Activated T-helper 1 cell treated with anti-CD3 and anti-CD28 coated beads, Interleukin-12 subunit alpha, Interleukin-12 subunit beta, Interleukin-2, Interleukin-4 antibody, amounts not matched to agents 30 ng/mL and 10 ng/mL and 1 ng/mL, durations not matched to agents 14 hours and 24 hours and 36 hours (primary cell): ENCODE measurements at regions of chr10 and their contacts with region 1.

Region 1: GRCh38 chr10:100373298-100374136 is 26.5 kb downstream of the SCD start:
- DNase-seq: peak; percentile 85
- H3K4me3 Mint-ChIP-seq: no peak overlapping the region
- H3K27ac Mint-ChIP-seq: no peak overlapping the region
- H3K4me1 Mint-ChIP-seq: peaks cover 30% of the 10 kb centered on the region
- H3K27me3 Mint-ChIP-seq: no peaks in the 10 kb centered on the region

Region 2: DNA sequence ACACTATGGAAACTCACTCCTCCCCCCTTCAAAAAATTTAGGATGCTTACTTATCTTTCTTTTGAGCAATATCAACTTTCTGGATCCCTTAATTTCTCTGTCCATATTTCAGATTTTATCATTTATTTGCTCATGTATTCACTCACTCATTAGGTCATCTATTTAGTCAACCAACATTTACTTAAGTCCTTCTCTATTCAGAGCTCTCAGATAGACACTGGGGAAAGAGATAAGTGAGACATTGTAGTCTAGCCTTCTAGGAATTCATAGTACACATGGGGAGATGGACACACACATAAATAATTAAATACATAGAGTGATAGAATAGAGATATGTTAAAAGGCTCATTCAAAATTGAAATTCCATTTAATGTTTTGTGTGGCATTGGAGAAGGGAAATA is 301.0 kb before region 1 on chr10:
- intact Hi-C with region 1: no loop called
- DNase-seq: no peak
- H3K4me3 Mint-ChIP-seq: no peak overlapping the region
- H3K27ac Mint-ChIP-seq: no peak overlapping the region
- H3K4me1 Mint-ChIP-seq: no peaks in the 10 kb centered on the region
- H3K27me3 Mint-ChIP-seq: peaks cover 3% of the 10 kb centered on the region

Region 3: GRCh38 chr10:100148353-100149211 is 224.9 kb before region 1 on chr10:
- intact Hi-C with region 1: loop called (anchors 2 kb)
- DNase-seq: no peak
- H3K4me3 Mint-ChIP-seq: peak overlapping the region; percentile 40
- H3K27ac Mint-ChIP-seq: peak overlapping the region; percentile 92
- H3K4me1 Mint-ChIP-seq: peaks cover 26% of the 10 kb centered on the region
- H3K27me3 Mint-ChIP-seq: peaks cover 2% of the 10 kb centered on the region

Region 4: GRCh38 chr10:100286051-100287033 is 87.2 kb before region 1 on chr10 and contains the start of gene BLOC1S2:
- intact Hi-C with region 1: loop called (anchors 1 kb)
- DNase-seq: peak; percentile 91
- H3K4me3 Mint-ChIP-seq: peak within 1 kb of the TSS; percentile 99
- H3K27ac Mint-ChIP-seq: peak within 1 kb of the TSS; percentile 99
- H3K4me1 Mint-ChIP-seq: peaks cover 28% of the 10 kb centered on the region
- H3K27me3 Mint-ChIP-seq: peaks cover 3% of the 10 kb centered on the region
- total RNA-seq, gene BLOC1S2: 65.7 and 66.5 TPM in 2 replicates

Region 5: DNA sequence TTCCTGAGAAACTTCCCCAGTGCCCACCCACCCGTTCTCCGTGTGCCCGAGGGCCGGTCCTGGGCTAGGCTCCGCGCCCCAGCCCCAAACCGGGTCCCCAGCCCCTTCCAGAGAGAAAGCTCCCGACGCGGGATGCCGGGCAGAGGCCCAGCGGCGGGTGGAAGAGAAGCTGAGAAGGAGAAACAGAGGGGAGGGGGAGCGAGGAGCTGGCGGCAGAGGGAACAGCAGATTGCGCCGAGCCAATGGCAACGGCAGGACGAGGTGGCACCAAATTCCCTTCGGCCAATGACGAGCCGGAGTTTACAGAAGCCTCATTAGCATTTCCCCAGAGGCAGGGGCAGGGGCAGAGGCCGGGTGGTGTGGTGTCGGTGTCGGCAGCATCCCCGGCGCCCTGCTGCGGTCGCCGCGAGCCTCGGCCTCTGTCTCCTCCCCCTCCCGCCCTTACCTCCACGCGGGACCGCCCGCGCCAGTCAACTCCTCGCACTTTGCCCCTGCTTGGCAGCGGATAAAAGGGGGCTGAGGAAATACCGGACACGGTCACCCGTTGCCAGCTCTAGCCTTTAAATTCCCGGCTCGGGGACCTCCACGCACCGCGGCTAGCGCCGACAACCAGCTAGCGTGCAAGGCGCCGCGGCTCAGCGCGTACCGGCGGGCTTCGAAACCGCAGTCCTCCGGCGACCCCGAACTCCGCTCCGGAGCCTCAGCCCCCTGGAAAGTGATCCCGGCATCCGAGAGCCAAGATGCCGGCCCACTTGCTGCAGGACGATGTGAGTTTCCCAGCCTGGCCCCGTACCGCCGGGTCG is 26.6 kb before region 1 on chr10 and contains the start of gene SCD:
- intact Hi-C with region 1: loop called (anchors 1 kb)
- DNase-seq: peak; percentile 88
- H3K4me3 Mint-ChIP-seq: peak within 1 kb of the TSS; percentile 100
- H3K27ac Mint-ChIP-seq: peak within 1 kb of the TSS; percentile 99
- H3K4me1 Mint-ChIP-seq: peaks cover 72% of the 10 kb centered on the region
- H3K27me3 Mint-ChIP-seq: no peaks in the 10 kb centered on the region
- total RNA-seq, gene SCD: 194 TPM in 2 replicates

Region 6: DNA sequence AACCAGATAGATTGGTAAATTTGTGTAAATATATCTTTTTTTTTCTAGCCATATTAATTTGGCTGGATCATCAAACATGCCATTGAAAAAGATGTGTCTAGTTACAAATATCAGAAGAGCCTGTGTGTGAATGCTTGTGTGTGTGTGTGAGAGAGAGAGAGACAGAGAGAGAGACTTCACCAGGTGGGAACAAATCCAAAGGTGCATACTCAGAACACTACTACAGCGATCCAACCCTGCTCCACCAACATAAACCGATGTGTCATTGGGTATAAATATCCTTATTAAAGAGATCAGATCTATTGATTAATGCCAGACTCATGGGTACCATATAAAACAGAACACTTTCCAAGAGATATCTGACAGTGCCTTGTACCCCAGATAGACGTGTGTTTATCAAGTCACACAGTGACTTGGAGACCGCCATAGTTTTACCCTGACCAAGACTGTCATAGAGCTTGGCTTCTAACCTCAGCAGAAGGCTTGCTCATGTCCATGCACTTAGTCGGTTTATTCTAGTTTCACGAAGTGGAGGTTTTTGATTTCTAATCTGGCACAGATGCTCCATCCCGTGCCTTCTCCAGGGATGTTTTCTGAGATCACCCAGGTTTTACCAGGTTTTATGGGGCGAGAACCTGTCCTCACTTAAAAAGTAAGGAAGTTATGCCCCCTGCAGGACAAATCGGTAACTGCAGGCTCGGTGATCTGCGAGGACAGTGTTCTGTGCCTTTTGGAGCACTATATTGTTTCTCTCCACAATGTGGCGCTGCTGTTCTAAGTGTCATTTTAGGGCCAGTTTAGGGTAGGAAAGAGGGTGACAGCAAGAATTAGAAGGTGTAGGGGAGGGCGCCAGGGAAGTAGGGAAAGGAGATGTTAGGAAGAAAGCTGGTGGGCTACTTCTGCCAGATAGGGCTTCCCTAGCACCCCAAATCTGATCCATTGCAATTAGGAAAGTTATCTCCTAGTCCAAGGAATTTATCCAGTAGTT is 60.0 kb after region 1 on chr10:
- intact Hi-C with region 1: loop called (anchors 1 kb)
- DNase-seq: peak; percentile 89
- H3K4me3 Mint-ChIP-seq: no peak overlapping the region
- H3K27ac Mint-ChIP-seq: no peak overlapping the region
- H3K4me1 Mint-ChIP-seq: peaks cover 17% of the 10 kb centered on the region
- H3K27me3 Mint-ChIP-seq: no peaks in the 10 kb centered on the region

Region 7: GRCh38 chr10:100529475-100530298 is 156.2 kb after region 1 on chr10 and contains the start of gene NDUFB8:
- intact Hi-C with region 1: loop called (anchors 2 kb)
- DNase-seq: peak; percentile 86
- H3K4me3 Mint-ChIP-seq: peak within 1 kb of the TSS; percentile 92
- H3K27ac Mint-ChIP-seq: peak within 1 kb of the TSS; percentile 97
- H3K4me1 Mint-ChIP-seq: peaks cover 54% of the 10 kb centered on the region
- H3K27me3 Mint-ChIP-seq: no peaks in the 10 kb centered on the region
- total RNA-seq, gene NDUFB8: 292 and 304 TPM in 2 replicates

Region 8: DNA sequence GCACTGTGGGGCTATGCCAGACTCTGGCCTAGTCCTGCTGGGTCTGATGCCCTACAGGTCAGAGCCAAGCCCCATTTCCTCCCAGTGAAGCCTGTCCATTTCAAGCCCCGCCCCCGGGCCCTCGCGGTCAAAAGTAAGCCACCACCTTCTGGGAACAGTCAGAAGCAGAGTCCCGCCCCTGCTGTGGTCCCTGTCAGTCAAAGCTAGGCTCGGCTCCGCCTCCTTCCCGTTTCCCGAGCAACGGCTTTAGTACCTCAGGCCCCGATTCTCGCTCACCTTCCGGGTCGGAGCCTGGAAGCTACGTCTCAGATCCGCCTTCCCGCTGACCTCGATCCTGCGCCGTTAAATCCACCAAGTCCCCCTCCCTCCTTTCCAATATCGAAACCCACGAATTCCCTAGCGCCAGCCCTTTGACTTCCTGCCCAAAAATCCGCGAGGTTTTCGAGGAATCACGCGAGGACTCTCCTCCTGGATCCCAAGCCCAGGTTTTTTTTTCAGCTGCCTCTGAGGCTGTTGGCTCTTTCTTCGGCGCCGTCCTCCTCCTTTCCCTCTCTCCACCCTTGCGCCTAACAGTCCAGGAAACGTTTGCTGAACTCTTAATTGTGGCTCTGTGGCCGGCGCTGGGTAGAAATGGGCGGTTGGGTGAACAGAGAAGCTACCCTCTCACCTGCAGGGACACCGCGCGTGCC is 669.3 kb after region 1 on chr10:
- intact Hi-C with region 1: loop called (anchors 5 kb)
- DNase-seq: peak; percentile 85
- H3K4me3 Mint-ChIP-seq: peak overlapping the region; percentile 91
- H3K27ac Mint-ChIP-seq: peak overlapping the region; percentile 84
- H3K4me1 Mint-ChIP-seq: peaks cover 27% of the 10 kb centered on the region
- H3K27me3 Mint-ChIP-seq: peaks cover 20% of the 10 kb centered on the region